A673 (cell line): ENCODE measurements at regions of chr17 and their contacts with region 1.

Region 1: GRCh38 chr17:28252436-28252835 is 66.6 kb upstream of the TMEM97 start:
- DNase-seq: no peak
- H3K4me3 ChIP-seq: no peak overlapping the region
- H3K27ac ChIP-seq: no peak overlapping the region
- H3K4me1 ChIP-seq: no peaks in the 10 kb centered on the region
- H3K27me3 ChIP-seq: no peaks in the 10 kb centered on the region
- CTCF ChIP-seq: no peak

Region 2: GRCh38 chr17:27805520-27806146 is 446.8 kb before region 1 on chr17:
- CTCF ChIA-PET with region 1: interaction called, 6 read pairs
- POLR2A ChIA-PET with region 1: no interaction called
- intact Hi-C with region 1: loop called (anchors 1 kb)
- DNase-seq: peak; percentile 89
- H3K4me3 ChIP-seq: peak overlapping the region; percentile 30
- H3K27ac ChIP-seq: no peak overlapping the region
- H3K4me1 ChIP-seq: no peaks in the 10 kb centered on the region
- H3K27me3 ChIP-seq: no peaks in the 10 kb centered on the region
- CTCF ChIP-seq: peak; percentile 84